GM10248 (cell line): ENCODE measurements at regions of chr11 and their contacts with region 1.

Region 1: DNA sequence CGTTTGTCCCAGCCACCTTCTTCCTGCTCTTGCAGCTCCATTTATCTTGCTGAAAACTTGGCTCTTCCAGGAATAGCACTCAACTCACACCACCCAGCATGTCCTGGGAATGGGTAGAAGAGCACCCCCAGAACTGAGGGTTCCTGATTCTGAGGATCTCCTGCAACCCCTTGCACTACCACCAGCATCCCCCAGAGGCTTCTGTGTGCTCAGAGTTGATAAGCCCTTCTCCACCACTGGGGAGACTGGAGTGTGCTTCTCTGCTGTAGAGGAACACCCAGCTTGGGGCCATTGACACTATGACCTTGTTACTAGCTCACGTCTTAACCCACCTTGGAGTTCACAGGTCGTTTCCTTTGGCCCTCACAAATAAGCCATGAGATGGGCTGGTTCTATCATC is 121.0 kb downstream of the GRIK4 start:
- DNase-seq: peak; percentile 55
- CTCF ChIP-seq: peak; percentile 7

Region 2: GRCh38 chr11:120615391-120615790 is 17.2 kb before region 1 on chr11:
- CTCF ChIA-PET with region 1: interaction called, 10 read pairs
- POLR2A ChIA-PET with region 1: interaction called, 3 read pairs
- DNase-seq: no peak
- CTCF ChIP-seq: no peak

Region 3: DNA sequence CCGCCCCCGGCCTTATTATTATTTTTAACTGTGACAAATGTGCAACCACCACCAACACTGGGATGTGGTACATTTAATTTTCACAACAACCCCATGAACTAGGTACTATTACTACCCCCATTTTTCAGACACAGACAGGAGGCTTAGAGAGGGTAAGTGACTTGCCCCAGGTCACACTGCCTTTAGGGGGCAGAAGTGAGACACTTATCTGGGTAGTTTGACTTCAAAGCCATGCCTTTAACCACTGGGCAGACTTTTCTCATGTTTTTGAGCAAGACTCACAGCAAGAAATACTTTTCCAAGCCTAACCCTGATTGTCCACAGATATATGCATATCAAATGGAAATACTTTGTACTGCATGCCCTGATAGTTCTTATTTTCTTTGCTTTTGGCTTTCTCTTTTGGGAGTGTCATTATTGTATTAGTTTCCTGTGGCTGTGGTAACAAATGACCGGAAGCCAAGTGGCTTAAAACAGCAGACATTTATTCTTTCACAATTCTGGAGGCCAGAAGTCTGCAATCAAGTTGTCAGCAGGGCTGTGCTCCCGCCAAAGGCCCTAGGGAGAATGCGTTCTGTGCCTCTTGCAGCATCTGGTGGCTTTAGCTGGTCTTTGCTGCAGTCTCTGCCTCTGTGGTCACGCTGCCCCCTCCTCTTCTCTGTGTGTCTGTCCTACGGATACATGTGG is 10.2 kb before region 1 on chr11:
- CTCF ChIA-PET with region 1: interaction called, 26 read pairs
- POLR2A ChIA-PET with region 1: no interaction called
- DNase-seq: no peak
- CTCF ChIP-seq: peak; percentile 36